RWPE1 (cell line): ENCODE measurements at regions of chr6 and their contacts with region 1.

Region 1: DNA sequence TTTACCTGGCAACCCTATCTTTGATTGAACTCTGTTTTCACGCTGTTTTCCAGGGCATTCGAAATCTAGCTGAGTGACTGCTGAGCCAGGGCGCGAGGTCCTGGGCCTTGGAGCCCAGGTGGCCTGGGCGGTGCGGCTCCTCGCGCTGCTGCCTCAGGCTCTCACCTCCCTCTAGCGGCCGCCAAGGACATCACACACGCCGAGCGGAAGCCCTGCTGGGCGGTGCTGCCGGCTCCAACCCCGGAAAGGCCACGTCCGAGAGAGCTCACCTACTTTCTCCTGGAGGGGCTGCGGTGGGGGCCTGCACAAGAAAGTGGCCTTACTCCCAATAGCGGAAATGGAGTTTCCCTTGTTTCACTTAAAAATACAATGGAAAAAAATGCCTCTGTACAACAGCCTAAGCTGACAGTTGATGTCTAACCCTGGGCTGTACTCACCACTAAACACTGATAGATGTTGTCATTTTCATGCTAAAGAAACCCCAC is 77.7 kb downstream of the ELOVL4 start:
- DNase-seq: peak; percentile 81
- H3K27ac ChIP-seq: no peak overlapping the region
- CTCF ChIP-seq: peak; percentile 95

Region 2: DNA sequence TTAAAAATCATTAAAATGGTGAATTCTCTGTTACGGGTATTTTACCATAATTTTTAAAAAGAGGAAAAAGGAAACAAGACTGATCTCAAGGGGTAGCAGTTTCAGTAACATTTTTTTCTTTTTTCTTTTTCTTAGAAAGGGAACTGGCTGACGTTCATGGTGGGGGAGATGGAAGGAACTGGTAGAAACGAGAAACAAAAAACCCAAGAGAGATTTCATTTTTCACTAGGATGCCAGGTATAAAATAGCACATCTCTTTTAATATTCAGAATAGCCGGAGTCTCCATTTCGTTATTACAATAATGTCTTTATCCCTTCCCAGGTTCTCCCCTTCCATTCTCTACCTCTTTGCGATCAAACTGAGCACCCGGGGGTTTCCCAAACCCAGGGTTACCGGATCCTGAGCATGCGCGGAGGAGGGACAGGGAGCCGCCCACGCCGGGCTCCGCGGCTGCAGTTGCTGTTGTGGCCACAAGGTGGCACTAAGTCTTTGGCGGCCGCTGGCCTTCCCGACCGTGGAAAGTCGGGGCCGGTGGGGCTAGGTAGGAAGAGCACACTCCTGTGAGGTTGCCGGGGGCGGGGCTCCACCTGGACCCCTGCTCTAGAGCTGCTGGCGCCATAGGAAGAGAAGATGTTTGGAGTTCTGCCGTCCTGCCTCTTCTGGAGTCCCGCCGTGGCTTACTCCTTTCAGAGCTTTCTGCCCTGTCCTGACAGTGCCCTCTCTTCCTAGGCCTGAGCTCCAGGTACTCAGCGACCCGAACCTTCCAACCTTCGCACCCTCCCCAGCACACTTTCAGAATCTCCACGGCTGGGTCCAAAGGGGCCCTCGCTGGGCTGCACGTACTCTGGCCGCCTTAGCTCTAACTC is 91.7 kb before region 1 on chr6:
- CTCF ChIA-PET with region 1: interaction called, 27 read pairs
- POLR2A ChIA-PET with region 1: no interaction called
- DNase-seq: peak; percentile 93
- H3K27ac ChIP-seq: no peak overlapping the region
- CTCF ChIP-seq: peak; percentile 96

Region 3: GRCh38 chr6:79894939-79895338 is 25.3 kb after region 1 on chr6:
- CTCF ChIA-PET with region 1: interaction called, 11 read pairs
- POLR2A ChIA-PET with region 1: no interaction called
- DNase-seq: peak; percentile 29
- H3K27ac ChIP-seq: no peak overlapping the region
- CTCF ChIP-seq: no peak

Region 4: DNA sequence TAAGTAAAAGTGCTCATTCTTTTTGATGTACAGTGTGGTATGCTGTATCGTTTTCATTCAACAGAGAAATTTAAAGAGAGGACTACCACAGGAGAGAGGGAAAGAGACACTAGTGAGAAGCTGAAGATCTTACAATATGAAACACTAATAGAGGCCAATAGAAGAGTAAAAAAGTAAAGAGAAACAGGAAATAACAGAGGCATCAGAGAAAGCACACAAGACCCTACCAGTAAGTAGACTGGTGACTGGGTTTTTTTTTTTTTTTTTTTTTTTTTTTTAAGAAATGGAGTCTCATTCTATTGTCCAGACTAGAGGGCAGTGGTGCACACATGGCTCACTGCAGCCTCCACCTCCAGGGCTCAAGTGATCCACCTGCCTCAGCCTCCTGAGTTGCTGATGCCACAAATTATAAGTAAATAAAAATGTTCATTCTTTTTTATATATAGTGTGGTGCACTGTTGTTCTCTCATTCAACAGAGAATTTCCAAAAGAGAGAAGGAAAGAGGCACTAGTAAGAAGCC is 58.9 kb after region 1 on chr6:
- CTCF ChIA-PET with region 1: no interaction called
- POLR2A ChIA-PET with region 1: no interaction called
- DNase-seq: no peak
- H3K27ac ChIP-seq: no peak overlapping the region
- CTCF ChIP-seq: no peak

Region 5: DNA sequence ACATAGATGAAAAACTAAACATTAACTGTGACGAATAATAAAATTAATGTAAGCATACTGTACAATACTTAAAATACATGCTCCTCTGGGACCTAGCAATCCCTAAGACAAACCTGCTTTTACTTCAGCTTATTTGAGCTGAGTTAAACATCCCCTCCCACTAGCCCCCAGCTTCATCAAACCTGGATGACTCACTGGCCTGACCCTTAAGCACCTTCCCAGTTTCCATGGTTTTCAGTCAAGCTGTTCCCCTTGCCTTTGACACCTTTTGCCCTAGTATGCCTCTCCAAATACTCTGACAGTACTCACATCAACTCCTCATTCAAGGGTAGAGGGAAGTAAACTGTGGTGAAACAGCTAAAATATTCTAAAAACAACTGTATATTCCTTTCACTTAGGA is 73.5 kb after region 1 on chr6:
- CTCF ChIA-PET with region 1: interaction called, 11 read pairs
- POLR2A ChIA-PET with region 1: no interaction called
- DNase-seq: no peak
- H3K27ac ChIP-seq: no peak overlapping the region
- CTCF ChIP-seq: no peak